BJ (cell line): ENCODE measurements at regions of chr1 and their contacts with region 1.

Region 1: DNA sequence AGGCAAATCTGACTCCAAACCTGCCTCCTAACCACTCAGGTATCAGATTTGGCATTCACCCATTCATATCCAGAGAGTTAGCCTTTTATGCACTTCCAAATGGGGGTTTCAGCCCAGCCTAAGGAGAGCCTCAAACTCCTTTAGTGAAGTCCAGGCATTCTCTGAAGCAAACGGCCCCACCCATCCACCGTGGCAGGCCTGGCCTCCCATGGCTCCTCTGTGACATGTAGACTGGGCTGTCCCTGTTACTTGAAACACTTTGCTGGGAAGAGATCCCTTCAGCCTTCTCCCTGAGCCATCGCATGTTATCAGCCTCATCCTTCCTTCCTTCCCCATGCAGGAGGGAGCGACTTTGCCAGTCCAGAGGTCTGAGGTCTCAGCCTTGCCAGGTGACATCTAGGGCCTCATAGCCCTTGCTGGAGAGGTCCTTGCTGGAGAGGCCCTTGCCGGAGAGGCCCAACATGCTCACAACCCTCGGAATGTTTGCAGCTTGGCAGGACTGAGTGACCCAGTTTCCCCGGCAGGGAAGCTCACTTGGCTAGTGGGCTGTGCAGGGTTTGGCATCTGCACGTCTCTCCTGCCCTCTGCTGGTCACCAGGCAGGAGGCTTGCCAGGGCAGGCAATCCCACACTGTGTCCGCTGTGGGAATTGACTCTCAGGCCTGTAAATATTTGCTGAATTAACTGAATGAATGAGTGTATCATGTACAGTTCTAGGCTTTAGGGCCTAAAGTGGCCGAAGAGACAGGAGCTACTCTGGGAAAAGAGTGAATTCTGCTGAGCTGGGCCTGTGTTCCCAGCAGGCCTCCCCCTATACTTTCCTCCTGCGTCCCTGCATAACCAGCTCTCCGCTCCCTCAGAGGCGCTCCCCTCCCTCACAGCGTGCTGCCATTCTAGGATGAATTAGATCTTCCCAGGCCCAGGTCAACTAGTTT is 26.7 kb upstream of the RBM15 start:
- DNase-seq: peak; percentile 13
- H3K4me3 ChIP-seq: no peak overlapping the region
- H3K27me3 ChIP-seq: no peaks in the 10 kb centered on the region
- CTCF ChIP-seq: peak; percentile 97

Region 2: GRCh38 chr1:110196917-110197765 is 115.3 kb before region 1 on chr1:
- CTCF ChIA-PET with region 1: interaction called, 1,014 read pairs
- POLR2A ChIA-PET with region 1: no interaction called
- DNase-seq: no peak
- H3K4me3 ChIP-seq: no peak overlapping the region
- H3K27me3 ChIP-seq: no peaks in the 10 kb centered on the region
- CTCF ChIP-seq: peak; percentile 98

Region 3: GRCh38 chr1:110298991-110299390 is 13.5 kb before region 1 on chr1:
- CTCF ChIA-PET with region 1: interaction called, 20 read pairs
- POLR2A ChIA-PET with region 1: no interaction called
- DNase-seq: peak; percentile 15
- H3K4me3 ChIP-seq: no peak overlapping the region
- H3K27me3 ChIP-seq: no peaks in the 10 kb centered on the region; the same call in none of the 2 replicates
- CTCF ChIP-seq: no peak

Region 4: DNA sequence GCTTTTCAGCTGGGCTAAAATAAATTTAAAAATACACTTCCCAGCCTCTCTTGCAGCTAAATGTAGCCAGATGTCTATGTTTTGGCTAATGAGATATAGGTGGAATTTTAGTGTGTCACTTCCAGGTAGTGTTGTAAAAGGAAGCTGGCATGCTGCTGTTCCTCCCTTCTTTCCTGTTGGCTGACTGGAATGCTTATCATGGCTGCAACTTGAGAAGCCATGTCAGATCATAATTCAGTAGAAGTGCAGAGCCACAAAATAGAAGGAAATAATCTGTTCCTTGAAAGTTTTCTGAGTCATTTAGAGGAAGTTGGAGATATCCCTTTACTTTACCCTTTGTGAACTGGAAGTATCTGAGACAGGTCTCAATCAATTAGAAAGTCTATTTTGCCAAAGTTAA is 15.8 kb after region 1 on chr1:
- CTCF ChIA-PET with region 1: interaction called, 16 read pairs
- POLR2A ChIA-PET with region 1: no interaction called
- DNase-seq: no peak
- H3K4me3 ChIP-seq: no peak overlapping the region
- H3K27me3 ChIP-seq: no peaks in the 10 kb centered on the region
- CTCF ChIP-seq: no peak